Activated B cell treated with CpG ODN at 0.5 μM for 24 hours (primary cell): ENCODE measurements at regions of chr12 and their contacts with region 1.

Region 1: GRCh38 chr12:128783129-128783574 is 40.6 kb downstream of the SLC15A4 start:
- DNase-seq: no peak
- ATAC-seq: peak; percentile 52
- H3K4me3 Mint-ChIP-seq: peak overlapping the region; percentile 56
- H3K27ac Mint-ChIP-seq: peak overlapping the region; percentile 64
- H3K4me1 Mint-ChIP-seq: peaks cover 30% of the 10 kb centered on the region
- H3K27me3 Mint-ChIP-seq: no peaks in the 10 kb centered on the region
- CTCF ChIP-seq: no peak

Region 2: GRCh38 chr12:128771681-128772080 is 11.5 kb before region 1 on chr12:
- CTCF ChIA-PET with region 1: interaction called, 10 read pairs
- POLR2A ChIA-PET with region 1: no interaction called
- intact Hi-C with region 1: no loop called
- DNase-seq: no peak
- ATAC-seq: no peak
- H3K4me3 Mint-ChIP-seq: no peak overlapping the region
- H3K27ac Mint-ChIP-seq: no peak overlapping the region
- H3K4me1 Mint-ChIP-seq: no peaks in the 10 kb centered on the region
- H3K27me3 Mint-ChIP-seq: peaks cover 12% of the 10 kb centered on the region
- CTCF ChIP-seq: no peak

Region 3: GRCh38 chr12:128823916-128824839 is 41.0 kb after region 1 on chr12 and contains the start of gene SLC15A4:
- CTCF ChIA-PET with region 1: interaction called, 4 read pairs
- POLR2A ChIA-PET with region 1: interaction called, 4 read pairs
- intact Hi-C with region 1: loop called (anchors 5 kb)
- DNase-seq: peak; percentile 93
- ATAC-seq: peak; percentile 82
- H3K4me3 Mint-ChIP-seq: peak within 1 kb of the TSS; percentile 87
- H3K27ac Mint-ChIP-seq: peak within 1 kb of the TSS; percentile 82
- H3K4me1 Mint-ChIP-seq: peaks cover 57% of the 10 kb centered on the region
- H3K27me3 Mint-ChIP-seq: no peaks in the 10 kb centered on the region
- CTCF ChIP-seq: no peak
- total RNA-seq, gene SLC15A4: 48.5 and 54.0 TPM in 2 replicates

Region 4: DNA sequence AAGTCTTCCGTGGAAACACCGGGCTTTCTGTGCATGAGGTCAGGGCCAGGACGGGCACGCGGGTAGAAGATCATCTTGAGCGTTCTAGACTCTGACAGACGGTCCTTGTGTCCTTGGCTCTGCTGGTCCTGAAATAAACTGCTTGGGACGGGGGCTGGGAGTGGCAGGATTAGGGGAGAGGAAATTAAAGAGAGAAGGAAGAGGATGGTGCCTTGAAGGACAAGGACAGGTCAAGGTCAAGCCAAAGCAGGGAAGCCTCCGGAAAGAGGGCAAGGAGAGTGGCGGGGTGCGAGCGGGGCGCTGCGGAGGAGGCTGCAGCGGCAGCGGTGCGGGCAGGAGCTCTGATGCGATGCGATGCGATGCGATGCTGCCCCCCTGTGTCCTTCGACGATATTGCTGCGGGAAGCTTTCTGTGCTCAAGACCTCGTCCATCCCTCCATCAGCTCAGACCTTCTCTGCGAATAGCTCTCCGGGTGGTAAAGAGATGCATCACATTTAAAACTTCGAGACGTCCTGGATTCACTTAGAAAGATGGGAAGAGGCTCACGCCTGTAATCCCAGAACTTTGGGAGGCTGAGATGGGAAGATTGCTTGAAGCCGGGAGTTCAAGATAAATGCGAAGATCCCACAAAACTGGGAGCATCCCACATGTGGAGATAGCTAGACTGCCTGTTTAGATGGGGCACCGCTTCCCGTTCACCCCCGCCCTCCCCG is 1230.8 kb after region 1 on chr12:
- CTCF ChIA-PET with region 1: no interaction called
- POLR2A ChIA-PET with region 1: no interaction called
- intact Hi-C with region 1: loop called (anchors 5 kb)
- DNase-seq: no peak
- ATAC-seq: no peak
- H3K4me3 Mint-ChIP-seq: no peak overlapping the region
- H3K27ac Mint-ChIP-seq: no peak overlapping the region
- H3K4me1 Mint-ChIP-seq: no peaks in the 10 kb centered on the region
- H3K27me3 Mint-ChIP-seq: peaks cover 6% of the 10 kb centered on the region
- CTCF ChIP-seq: no peak